ENCODE measurements at regions of chr2 and their contacts with region 1.

Region 1: DNA sequence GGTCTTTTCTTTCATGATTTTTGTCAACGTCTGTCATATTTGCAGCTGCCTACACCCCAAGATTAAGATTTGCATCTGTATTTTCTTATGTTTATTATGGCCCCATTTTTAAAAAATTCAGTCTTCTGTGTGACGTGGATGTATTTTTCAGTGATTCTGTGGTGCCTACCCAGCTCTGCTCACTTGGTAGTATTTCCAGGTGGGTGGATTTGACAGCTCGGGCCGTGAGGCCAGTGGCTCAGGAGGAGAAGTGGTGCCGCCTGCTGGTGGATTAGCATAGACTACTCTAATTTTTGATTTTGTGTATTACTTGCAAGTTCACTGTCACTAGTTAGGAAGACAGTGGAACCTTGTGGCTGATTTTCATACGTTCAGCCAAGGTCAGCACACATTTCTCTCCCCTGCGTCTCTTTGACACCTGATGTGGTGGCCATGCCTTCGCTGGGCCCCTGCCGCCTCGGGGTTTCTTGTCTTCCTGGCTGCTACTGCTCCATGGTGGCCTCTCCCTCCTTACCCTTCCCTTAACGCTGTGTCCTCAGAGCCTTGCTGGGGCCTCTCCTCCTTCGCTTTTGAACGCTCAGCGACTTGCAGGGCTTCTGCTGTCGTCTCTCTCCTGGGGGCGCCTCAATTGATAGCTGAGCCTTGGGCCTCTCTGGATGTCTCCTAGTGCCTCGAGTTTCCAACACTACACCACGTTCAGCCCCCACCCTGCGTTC is 89.3 kb downstream of the DGKD start:
- DNase-seq: peak; percentile 91
- H3K4me3 ChIP-seq: no peak overlapping the region
- H3K27ac ChIP-seq: no peak overlapping the region
- H3K4me1 ChIP-seq: peaks cover 0 to 9% (median 1%) of the 10 kb centered on the region in 4 donors
- H3K27me3 ChIP-seq: no peaks in the 10 kb centered on the region
- CTCF ChIP-seq: peak; percentile 74 to 93 (median 80)
- EP300 ChIP-seq: no peak
- POLR2A ChIP-seq: no peak

Region 2: DNA sequence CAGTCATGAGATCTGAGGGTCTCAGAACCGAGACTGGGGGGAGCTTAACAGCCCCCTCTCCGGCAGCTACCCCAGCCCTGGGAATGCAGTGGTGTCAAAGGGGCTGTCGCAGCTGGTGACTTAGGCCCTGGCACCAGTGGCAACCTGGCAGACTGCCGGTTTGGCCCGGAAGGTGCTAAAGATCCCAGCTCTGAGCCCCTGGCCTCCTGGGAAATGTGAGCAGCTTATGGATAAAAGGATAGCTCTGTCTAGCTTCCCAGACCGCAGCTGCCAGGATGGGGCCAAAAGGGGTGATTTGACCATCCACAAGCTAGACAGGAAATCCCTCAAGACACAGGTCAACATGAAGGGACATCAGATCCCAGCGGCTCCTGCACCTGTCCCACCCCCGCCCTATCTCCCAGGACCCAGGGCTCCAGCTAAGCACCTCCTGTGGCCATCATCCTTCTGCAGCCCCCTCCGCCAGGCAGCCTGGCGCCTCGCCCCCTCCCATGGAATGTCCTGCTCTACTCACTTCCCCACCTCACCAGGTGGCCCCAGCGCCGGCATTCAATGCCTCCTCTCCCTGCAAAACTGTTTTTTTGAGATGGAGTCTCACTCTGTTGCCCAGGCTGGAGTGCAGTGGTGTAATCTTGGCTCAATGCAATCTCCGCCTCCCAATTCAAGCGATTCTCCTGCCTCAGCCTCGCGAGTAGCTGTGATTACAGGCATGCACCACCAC is 843.4 kb before region 1 on chr2:
- intact Hi-C with region 1: loop called (anchors 10 kb)
- DNase-seq: no peak
- H3K4me3 ChIP-seq: no peak overlapping the region
- H3K27ac ChIP-seq: no peak overlapping the region
- H3K4me1 ChIP-seq: no peaks in the 10 kb centered on the region
- H3K27me3 ChIP-seq: no peaks in the 10 kb centered on the region
- CTCF ChIP-seq: no peak
- EP300 ChIP-seq: no peak
- POLR2A ChIP-seq: no peak

Region 3: GRCh38 chr2:233353769-233354499 is 89.7 kb before region 1 on chr2 and contains the start of gene DGKD:
- intact Hi-C with region 1: loop called (anchors 1 kb)
- DNase-seq: peak; percentile 76
- H3K4me3 ChIP-seq: peak within 1 kb of the TSS; percentile 63 to 81 (median 74)
- H3K27ac ChIP-seq: peak within 1 kb of the TSS; percentile 56 to 74 (median 70)
- H3K4me1 ChIP-seq: peaks cover 0 to 46% (median 36%) of the 10 kb centered on the region in 4 donors
- H3K27me3 ChIP-seq: no peaks in the 10 kb centered on the region
- CTCF ChIP-seq: peak in 2 of 4 experiments; percentile 21 to 59
- EP300 ChIP-seq: no peak
- POLR2A ChIP-seq: no peak
- total RNA-seq, gene DGKD: 10.7 to 20.6 (median 16.0) TPM